ENCODE measurements at regions of chr9 and their contacts with region 1.

Region 1: GRCh38 chr9:8486095-8486494 is 686.5 kb upstream of the DMAC1 start:
- DNase-seq: no peak

Region 2: GRCh38 chr9:8895861-8896224 is 409.7 kb after region 1 on chr9:
- intact Hi-C with region 1: loop called (anchors 5 kb)
- DNase-seq: no peak

Region 3: GRCh38 chr9:9002826-9003583 is 516.9 kb after region 1 on chr9:
- intact Hi-C with region 1: loop called (anchors 5 kb)
- DNase-seq: no peak

Measured in cardiac septum (tissue), 1 donor.